ENCODE measurements at regions of chr3 and their contacts with region 1.

Region 1: DNA sequence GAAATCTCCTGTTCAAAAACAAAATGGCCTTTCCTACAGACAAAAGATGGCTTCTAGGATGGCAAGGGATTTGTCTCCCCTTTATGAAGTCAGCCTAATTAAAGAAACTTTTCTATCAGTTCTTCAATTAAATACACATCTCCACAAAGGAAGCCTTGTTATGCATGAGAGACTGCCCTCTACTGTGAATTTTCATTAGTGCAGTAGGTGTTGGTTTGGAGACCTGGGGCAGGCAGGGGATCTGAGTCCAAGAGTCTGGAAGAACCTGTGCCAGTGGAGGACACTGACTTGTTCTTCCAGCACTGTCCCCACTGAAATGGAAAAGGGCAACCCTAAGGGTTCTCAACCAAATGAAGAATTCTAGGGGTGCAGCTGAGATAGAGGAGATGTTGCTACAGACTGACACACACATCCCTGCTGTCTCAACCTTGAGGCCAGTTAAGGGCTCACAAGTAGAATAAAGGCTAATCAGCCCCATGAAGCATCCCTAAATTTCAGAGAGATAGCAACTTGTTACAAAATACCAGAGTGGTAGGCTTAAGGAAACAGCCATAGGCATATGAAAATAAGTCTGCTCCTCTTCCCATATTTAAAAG is 174.0 kb upstream of the PRICKLE2 start:
- DNase-seq: peak in 1 of 2 experiments; percentile 67
- H3K4me3 ChIP-seq: no peak overlapping the region
- H3K4me3 Mint-ChIP-seq: no peak overlapping the region
- H3K27ac Mint-ChIP-seq: no peak overlapping the region
- H3K4me1 ChIP-seq: no peaks in the 10 kb centered on the region
- H3K4me1 Mint-ChIP-seq: no peaks in the 10 kb centered on the region
- H3K27me3 ChIP-seq: no peaks in the 10 kb centered on the region
- H3K27me3 Mint-ChIP-seq: no peaks in the 10 kb centered on the region
- CTCF ChIP-seq: peak; percentile 48 to 71

Region 2: GRCh38 chr3:64319391-64319790 is 79.9 kb before region 1 on chr3:
- CTCF ChIA-PET with region 1: no interaction called
- POLR2A ChIA-PET with region 1: no interaction called
- intact Hi-C with region 1: loop called (anchors 2 kb)
- DNase-seq: peak; percentile 37 to 63
- H3K4me3 ChIP-seq: no peak overlapping the region
- H3K4me3 Mint-ChIP-seq: no peak overlapping the region
- H3K27ac Mint-ChIP-seq: peak overlapping the region; percentile 66
- H3K4me1 ChIP-seq: peaks cover 54% of the 10 kb centered on the region
- H3K4me1 Mint-ChIP-seq: peaks cover 38% of the 10 kb centered on the region
- H3K27me3 ChIP-seq: no peaks in the 10 kb centered on the region
- H3K27me3 Mint-ChIP-seq: no peaks in the 10 kb centered on the region
- CTCF ChIP-seq: peak; percentile 29 to 33

Region 3: DNA sequence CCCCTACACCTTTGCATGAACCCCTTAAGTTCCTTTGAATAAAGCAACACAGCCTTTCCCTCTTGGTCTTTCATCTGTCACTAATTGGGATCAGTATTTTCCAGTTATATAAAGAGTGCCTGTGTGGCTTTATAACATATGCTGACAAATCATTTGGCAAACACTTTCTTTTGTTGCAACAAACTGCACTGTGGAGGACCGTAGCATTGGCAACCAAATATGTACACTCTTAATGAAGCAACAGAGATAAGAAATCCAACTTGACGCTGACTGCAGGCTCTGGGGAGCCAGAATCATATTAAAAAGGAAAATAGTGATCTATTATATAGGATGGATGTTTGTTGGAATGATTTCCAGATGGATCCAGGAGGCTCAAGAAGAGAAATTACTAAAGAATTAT is 53.9 kb before region 1 on chr3:
- CTCF ChIA-PET with region 1: no interaction called
- POLR2A ChIA-PET with region 1: no interaction called
- intact Hi-C with region 1: loop called (anchors 2 kb)
- DNase-seq: peak in 1 of 2 experiments; percentile 22
- H3K4me3 ChIP-seq: no peak overlapping the region
- H3K4me3 Mint-ChIP-seq: no peak overlapping the region
- H3K27ac Mint-ChIP-seq: peak overlapping the region; percentile 91
- H3K4me1 ChIP-seq: peaks cover 41% of the 10 kb centered on the region
- H3K4me1 Mint-ChIP-seq: peaks cover 38% of the 10 kb centered on the region
- H3K27me3 ChIP-seq: no peaks in the 10 kb centered on the region
- H3K27me3 Mint-ChIP-seq: no peaks in the 10 kb centered on the region
- CTCF ChIP-seq: no peak

Region 4: DNA sequence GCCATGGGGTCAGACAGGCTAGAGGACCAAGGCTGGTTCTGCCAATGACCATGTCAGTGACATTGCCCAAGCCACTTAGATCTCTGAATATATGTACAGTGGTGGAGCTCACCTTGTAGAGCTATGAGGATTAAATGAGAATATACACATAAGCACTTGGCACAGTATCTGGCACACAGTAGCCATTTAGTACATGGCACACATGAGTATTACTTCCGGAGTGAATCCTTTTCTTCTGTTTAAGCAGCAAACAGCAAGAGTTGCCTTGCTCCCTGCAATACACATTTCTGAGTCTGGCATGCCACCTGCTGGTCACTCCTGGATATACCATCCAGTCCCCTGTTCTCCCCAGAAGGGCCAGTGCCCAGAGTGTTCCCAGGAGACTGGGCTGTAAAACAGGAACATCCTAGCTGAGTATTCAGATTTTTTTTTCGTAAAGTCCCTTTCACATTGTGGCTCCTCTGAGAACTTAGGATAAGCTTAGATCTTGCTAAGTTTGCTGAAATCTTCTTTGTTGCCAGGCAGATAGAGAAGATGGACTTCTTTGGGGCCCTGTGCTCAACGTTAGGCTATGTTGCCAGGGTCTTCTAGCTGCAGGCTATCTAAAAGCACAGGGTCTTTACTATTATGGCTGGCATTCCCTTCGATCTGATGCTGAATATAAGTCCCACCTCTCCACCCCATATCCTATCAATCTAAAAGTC is 85.1 kb after region 1 on chr3:
- CTCF ChIA-PET with region 1: no interaction called
- POLR2A ChIA-PET with region 1: no interaction called
- intact Hi-C with region 1: loop called (anchors 1 kb)
- DNase-seq: peak; percentile 79 to 85
- H3K4me3 ChIP-seq: no peak overlapping the region
- H3K4me3 Mint-ChIP-seq: no peak overlapping the region
- H3K27ac Mint-ChIP-seq: no peak overlapping the region
- H3K4me1 ChIP-seq: peaks cover 6% of the 10 kb centered on the region; the same call in 1 of the 2 replicates
- H3K4me1 Mint-ChIP-seq: peaks cover 6% of the 10 kb centered on the region
- H3K27me3 ChIP-seq: no peaks in the 10 kb centered on the region
- H3K27me3 Mint-ChIP-seq: no peaks in the 10 kb centered on the region
- CTCF ChIP-seq: peak; percentile 83 to 88

Measured in Caco-2 (cell line).